ENCODE measurements at regions of chr18 and their contacts with region 1.

Region 1: DNA sequence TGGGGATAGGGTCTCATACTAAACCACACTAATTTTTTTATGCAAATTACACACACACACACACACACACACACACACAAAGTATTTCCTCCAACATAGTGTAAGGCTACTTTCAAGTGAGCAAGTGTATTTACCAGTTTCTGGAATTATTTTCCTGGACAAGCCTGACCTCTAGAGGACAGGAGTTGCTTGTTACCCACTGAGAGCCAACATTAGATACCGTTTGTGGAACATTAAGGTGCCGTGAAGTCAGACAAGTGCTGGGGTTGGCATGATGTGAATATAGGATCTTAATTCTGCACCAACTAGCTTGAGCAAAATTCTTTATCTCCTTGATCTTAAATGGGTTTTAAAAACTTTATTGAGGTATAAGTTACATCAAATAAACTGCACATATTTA is 39.3 kb upstream of the SERPINB2 start:
- DNase-seq: peak; percentile 48
- H3K4me3 Mint-ChIP-seq: no peak overlapping the region
- H3K27ac Mint-ChIP-seq: no peak overlapping the region
- H3K4me1 Mint-ChIP-seq: peaks cover 9% of the 10 kb centered on the region
- H3K27me3 Mint-ChIP-seq: no peaks in the 10 kb centered on the region
- CTCF ChIP-seq: peak; percentile 58

Region 2: DNA sequence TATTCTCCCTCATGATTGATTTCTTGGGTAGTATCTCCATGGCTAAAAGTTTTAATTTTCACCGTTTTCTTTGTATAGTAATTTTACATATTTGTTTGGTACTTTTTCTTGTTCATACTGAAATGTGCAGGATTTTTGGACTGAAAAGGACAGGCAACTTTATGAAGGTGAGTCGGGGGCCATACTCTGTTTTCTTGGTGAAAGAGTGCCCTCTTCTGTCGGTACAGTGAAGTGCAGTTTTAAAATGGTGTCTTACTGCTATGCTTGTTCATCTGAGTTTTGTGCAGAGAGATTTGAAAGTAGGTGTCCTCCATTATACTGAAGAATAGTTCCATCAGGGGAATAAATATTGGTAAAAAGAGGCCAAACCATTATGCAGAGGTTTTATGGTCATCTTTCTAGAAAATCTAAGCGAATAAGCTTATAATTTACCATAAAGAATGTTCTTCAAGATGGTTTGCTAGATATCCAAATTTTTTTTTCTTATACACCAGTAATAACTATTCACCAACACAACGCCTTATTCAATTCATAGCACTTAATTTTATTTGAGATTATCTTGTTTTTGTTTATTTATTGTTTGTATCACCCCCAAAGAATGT is 269.7 kb before region 1 on chr18:
- CTCF ChIA-PET with region 1: no interaction called
- intact Hi-C with region 1: loop called (anchors 1 kb)
- DNase-seq: peak; percentile 58
- H3K4me3 Mint-ChIP-seq: no peak overlapping the region
- H3K27ac Mint-ChIP-seq: no peak overlapping the region
- H3K4me1 Mint-ChIP-seq: no peaks in the 10 kb centered on the region
- H3K27me3 Mint-ChIP-seq: no peaks in the 10 kb centered on the region
- CTCF ChIP-seq: peak; percentile 74

Region 3: GRCh38 chr18:63637703-63638102 is 210.5 kb before region 1 on chr18:
- CTCF ChIA-PET with region 1: no interaction called
- intact Hi-C with region 1: no loop called
- DNase-seq: no peak
- H3K4me3 Mint-ChIP-seq: no peak overlapping the region
- H3K27ac Mint-ChIP-seq: no peak overlapping the region
- H3K4me1 Mint-ChIP-seq: peaks cover 24% of the 10 kb centered on the region
- H3K27me3 Mint-ChIP-seq: no peaks in the 10 kb centered on the region
- CTCF ChIP-seq: no peak

Region 4: GRCh38 chr18:63741769-63742168 is 106.4 kb before region 1 on chr18:
- CTCF ChIA-PET with region 1: interaction called, 19 read pairs
- intact Hi-C with region 1: loop called (anchors 5 kb)
- DNase-seq: no peak
- H3K4me3 Mint-ChIP-seq: no peak overlapping the region
- H3K27ac Mint-ChIP-seq: no peak overlapping the region
- H3K4me1 Mint-ChIP-seq: peaks cover 35% of the 10 kb centered on the region
- H3K27me3 Mint-ChIP-seq: no peaks in the 10 kb centered on the region
- CTCF ChIP-seq: peak; percentile 36

Region 5: DNA sequence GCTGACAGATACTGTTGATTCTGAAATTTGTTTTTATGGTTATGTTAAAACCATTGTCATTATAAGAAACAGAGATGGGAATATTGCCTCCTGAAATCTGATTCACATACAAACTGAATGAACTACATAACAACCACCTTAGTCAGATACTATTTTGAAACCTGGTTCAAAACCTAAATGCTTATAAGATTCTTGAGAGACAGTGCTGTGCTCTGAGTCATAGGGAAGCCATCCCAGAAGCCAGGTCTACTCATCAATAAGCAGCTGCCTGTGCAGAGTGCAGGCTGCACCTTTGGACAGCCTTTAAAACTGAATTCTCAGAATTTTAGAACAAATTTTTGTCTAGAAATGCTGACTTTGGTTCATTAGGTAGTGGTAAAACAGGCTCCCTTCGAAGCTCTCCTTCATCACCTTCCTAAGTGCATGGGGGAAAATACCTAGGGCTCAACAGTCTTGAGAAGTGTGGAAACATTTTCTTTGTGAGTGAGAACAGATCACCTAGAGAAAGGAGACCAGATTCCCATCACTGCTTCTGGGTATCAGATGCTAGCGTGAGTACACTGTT is 72.9 kb before region 1 on chr18 and contains the start of gene SERPINB7:
- CTCF ChIA-PET with region 1: no interaction called
- intact Hi-C with region 1: no loop called
- DNase-seq: no peak
- H3K4me3 Mint-ChIP-seq: no peak within 1 kb of the TSS
- H3K27ac Mint-ChIP-seq: no peak within 1 kb of the TSS
- H3K4me1 Mint-ChIP-seq: peaks cover 13% of the 10 kb centered on the region
- H3K27me3 Mint-ChIP-seq: no peaks in the 10 kb centered on the region
- CTCF ChIP-seq: no peak
- total RNA-seq, gene SERPINB7: 0.19 and 0.88 TPM in 2 replicates

Region 6: DNA sequence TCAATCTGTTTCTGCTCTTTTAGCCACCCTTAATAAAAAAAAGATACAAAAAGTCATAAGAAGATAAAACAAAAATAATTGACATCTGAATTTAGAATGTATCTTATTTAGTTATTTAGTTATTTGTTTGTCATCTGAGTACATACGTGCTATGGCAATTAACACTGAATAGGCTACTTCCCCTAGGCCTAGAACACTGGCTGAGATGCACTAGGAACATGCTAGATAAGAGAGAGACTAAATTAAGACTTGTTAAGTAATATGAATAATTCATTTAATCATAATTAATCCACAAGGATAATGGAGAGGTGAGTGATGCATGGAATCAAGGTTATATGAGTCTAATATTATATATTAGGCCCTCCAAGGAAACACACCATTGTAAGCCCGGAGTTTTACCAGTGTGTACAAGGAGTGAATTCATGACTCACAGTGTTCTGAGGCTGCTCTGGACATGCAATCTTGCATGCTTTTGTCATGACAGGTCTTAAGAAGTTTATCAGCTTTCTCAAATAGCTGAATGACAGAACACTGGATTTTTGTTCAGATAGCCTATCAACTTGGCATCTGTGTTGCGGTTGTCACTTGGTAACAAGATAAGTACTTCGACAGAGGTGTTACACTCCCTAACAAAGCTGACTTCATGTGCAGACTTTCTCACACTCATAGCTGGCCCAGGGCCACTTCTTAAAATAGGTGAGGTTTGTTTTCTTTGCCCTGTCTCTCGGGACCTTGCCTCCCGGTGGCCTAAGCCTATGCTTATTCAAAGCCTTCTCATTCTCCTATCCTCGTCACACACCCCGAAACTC is 34.4 kb after region 1 on chr18:
- CTCF ChIA-PET with region 1: no interaction called
- intact Hi-C with region 1: loop called (anchors 2 kb)
- DNase-seq: peak; percentile 88
- H3K4me3 Mint-ChIP-seq: peak overlapping the region; percentile 41
- H3K27ac Mint-ChIP-seq: peak overlapping the region; percentile 97
- H3K4me1 Mint-ChIP-seq: peaks cover 65% of the 10 kb centered on the region
- H3K27me3 Mint-ChIP-seq: no peaks in the 10 kb centered on the region
- CTCF ChIP-seq: no peak